SK-N-SH (cell line): ENCODE measurements at regions of chr2 and their contacts with region 1.

Region 1: DNA sequence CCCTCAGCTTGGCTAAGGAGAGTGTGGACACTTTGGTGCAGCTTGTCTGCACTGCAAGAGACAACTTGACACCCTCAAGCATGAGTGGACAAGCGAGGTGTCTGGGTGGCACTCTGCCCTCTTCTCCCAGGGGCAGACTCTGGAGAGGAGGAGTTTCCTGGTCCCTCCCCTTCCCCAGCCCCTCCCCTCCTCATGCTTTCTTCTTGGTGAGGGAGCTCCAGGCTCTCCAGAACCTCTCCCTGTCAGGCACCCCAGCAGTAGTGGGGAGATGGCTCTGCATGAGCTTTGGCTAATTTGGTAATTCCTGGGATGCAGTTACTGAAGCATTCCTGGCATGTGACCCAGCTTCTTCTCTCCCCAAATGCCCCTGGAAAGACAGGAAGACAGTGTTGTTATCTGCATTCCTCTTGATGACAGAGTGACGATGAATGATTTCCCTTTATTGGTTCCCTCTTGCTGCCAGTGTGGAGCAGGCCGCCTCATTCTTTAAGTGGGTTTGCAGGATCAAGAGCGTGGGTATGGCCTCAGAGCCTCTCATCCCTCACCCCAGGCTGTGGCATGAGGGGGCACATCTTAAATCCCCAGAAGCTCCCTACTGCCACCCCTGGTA is 89.2 kb downstream of the STPG4 start:
- DNase-seq: peak; percentile 49
- H3K4me3 ChIP-seq: no peak overlapping the region
- H3K27ac ChIP-seq: peak overlapping the region; percentile 96 to 97
- H3K4me1 ChIP-seq: peaks cover 69 to 95% of the 10 kb centered on the region in 2 experiments
- H3K27me3 ChIP-seq: no peaks in the 10 kb centered on the region
- CTCF ChIP-seq: peak; percentile 33; the same call in 1 of the 2 replicates
- EP300 ChIP-seq: peak; percentile 38 to 98; a peak in 3 of 4 replicates
- RAD21 ChIP-seq: no peak; the same call in 1 of the 2 replicates

Region 2: DNA sequence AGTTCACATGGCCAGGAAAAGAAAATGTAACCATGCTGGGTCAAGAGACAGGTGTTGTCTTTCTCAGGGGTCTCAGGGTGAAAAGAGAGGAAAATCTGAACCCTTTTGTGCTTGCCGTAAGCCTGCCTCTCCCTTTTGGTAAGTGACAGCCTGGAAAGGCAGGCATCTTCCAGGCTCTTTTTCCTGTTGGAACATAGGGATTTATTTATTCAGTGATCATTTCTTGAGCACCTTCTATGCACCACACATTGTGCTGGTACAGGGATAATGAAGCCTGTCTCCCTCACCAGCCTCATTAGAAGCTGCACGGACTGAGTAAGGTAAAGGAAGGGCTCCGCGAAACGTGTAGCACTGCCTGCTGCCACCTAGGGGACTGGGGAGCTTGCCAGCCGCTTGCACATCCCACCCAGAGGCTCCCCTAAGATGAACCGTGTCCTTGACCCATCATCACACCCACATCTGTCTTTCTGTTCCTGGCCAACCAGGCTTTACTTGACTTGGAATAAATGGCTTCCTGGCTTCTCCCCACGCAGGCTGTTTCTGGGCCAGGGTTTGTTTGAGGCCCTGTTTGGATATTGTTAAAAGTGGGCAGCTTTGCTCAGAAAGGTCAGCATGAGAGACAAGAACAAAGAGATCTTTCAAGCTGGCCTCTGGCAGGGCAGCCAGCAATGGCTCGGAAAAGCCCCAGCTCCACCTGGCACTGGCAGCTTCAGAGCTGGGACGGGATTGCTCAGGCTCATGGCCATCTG is 77.0 kb before region 1 on chr2:
- CTCF ChIA-PET with region 1: interaction called, 11 read pairs
- POLR2A ChIA-PET with region 1: interaction called, 4 read pairs
- DNase-seq: peak; percentile 74
- H3K4me3 ChIP-seq: no peak overlapping the region
- H3K27ac ChIP-seq: peak overlapping the region in 1 of 2 experiments; percentile 93; a peak in 2 of 4 replicates
- H3K4me1 ChIP-seq: peaks cover 34 to 71% of the 10 kb centered on the region in 2 experiments
- H3K27me3 ChIP-seq: no peaks in the 10 kb centered on the region
- CTCF ChIP-seq: peak; percentile 26
- EP300 ChIP-seq: no peak
- RAD21 ChIP-seq: peak; percentile 39

Region 3: DNA sequence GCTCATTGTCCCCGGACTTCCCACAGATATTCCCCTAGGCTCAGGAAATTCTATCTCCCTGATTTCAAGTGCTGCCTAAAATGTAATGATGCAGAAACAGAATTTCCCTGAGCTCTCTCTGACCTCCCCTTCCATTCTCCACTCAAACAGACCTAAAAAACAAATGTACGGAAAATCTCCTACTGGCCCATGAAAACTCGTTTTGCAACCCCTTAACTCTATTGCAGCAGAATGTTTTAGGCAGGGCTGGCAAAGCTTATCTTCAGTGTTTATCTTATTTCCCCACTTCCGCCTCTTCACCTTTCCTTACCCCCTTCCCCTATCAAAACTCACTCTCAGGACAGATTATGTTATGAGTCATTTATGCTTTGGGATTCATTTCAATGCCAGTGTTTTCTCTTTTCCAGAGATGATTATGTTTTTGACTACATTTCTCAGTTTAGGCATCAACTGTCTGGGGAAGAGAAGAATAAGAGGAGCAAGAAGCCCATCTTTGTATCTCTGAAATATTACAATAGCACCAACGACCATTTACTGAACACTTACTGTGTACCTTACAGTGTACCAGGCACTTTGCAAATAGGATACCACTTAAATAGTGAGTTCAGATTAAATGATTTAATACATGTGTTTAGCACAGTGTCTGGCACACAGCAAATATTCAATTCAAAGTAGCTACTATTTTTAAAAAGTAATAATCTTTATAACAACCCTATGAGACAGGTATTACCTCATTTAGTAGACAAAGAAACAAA is 143.2 kb after region 1 on chr2:
- CTCF ChIA-PET with region 1: no interaction called
- POLR2A ChIA-PET with region 1: no interaction called
- DNase-seq: no peak
- H3K4me3 ChIP-seq: no peak overlapping the region
- H3K27ac ChIP-seq: peak overlapping the region in 1 of 2 experiments; percentile 53; a peak in 2 of 4 replicates
- H3K4me1 ChIP-seq: peaks cover 9 to 35% of the 10 kb centered on the region in 2 experiments; a peak in 2 of 4 replicates
- H3K27me3 ChIP-seq: no peaks in the 10 kb centered on the region
- CTCF ChIP-seq: no peak
- EP300 ChIP-seq: no peak
- RAD21 ChIP-seq: no peak